H1 (cell line): ENCODE measurements at regions of chr6 and their contacts with region 1.

Region 1: GRCh38 chr6:37018198-37019064 is 13.0 kb downstream of the FGD2 start:
- DNase-seq: peak; percentile 77 to 93
- H3K4me3 ChIP-seq: no peak overlapping the region
- H3K27ac ChIP-seq: no peak overlapping the region
- H3K4me1 ChIP-seq: peaks cover 0 to 5% (median 3%) of the 10 kb centered on the region in 4 experiments; a peak in 5 of 7 replicates
- H3K27me3 ChIP-seq: no peaks in the 10 kb centered on the region
- CTCF ChIP-seq: peak; percentile 97 to 100 (median 97)
- EP300 ChIP-seq: no peak
- POLR2A ChIP-seq: no peak
- RAD21 ChIP-seq: peak; percentile 97

Region 2: GRCh38 chr6:36660771-36661471 is 357.5 kb before region 1 on chr6:
- CTCF ChIA-PET with region 1: no interaction called
- POLR2A ChIA-PET with region 1: no interaction called
- DNase-seq: peak in 1 of 2 experiments; percentile 91
- H3K4me3 ChIP-seq: peak overlapping the region in 3 of 4 experiments; percentile 17 to 41 (median 24); a peak in 4 of 8 replicates
- H3K27ac ChIP-seq: no peak overlapping the region
- H3K4me1 ChIP-seq: peaks cover 5 to 15% (median 7%) of the 10 kb centered on the region in 4 experiments
- H3K27me3 ChIP-seq: peaks cover 0 to 4% (median 0%) of the 10 kb centered on the region in 4 experiments; a peak in 2 of 7 replicates
- CTCF ChIP-seq: no peak
- EP300 ChIP-seq: no peak
- POLR2A ChIP-seq: no peak
- RAD21 ChIP-seq: no peak

Region 3: GRCh38 chr6:36679028-36679833 is 339.2 kb before region 1 on chr6:
- CTCF ChIA-PET with region 1: no interaction called
- POLR2A ChIA-PET with region 1: no interaction called
- DNase-seq: peak in 1 of 2 experiments; percentile 75
- H3K4me3 ChIP-seq: peak overlapping the region; percentile 55 to 76 (median 69)
- H3K27ac ChIP-seq: no peak overlapping the region
- H3K4me1 ChIP-seq: peaks cover 5 to 36% (median 16%) of the 10 kb centered on the region in 4 experiments
- H3K27me3 ChIP-seq: peaks cover 6 to 28% (median 20%) of the 10 kb centered on the region in 4 experiments
- CTCF ChIP-seq: no peak
- EP300 ChIP-seq: no peak
- POLR2A ChIP-seq: no peak; a peak in 1 of 3 replicates
- RAD21 ChIP-seq: no peak

Region 4: DNA sequence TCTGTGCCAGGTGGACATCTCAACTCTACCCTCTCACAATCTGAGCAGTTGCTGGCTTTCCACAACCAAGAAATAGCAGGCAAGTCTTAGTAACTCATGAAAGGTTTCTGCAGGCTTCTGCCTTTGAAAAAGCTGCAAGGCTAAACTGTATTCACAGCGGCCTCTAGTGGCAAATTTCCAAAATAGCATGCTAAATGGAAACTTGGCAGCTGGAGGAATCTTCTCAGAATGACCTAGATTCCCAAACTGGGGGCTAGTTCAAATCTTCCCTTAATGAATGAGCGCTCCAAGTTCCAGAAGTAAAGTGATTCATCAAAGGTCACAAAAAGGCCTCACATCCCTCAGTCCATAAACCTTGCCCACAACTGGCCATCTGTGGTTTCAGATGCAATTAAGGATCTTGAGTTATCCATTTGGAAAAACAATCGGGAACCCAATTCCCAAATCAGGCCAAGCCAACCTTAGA is 167.2 kb before region 1 on chr6:
- CTCF ChIA-PET with region 1: interaction called, 13 read pairs
- POLR2A ChIA-PET with region 1: no interaction called
- DNase-seq: peak in 1 of 2 experiments; percentile 71
- H3K4me3 ChIP-seq: no peak overlapping the region
- H3K27ac ChIP-seq: no peak overlapping the region
- H3K4me1 ChIP-seq: peaks cover 7 to 17% (median 9%) of the 10 kb centered on the region in 4 experiments
- H3K27me3 ChIP-seq: peaks cover 0 to 9% (median 0%) of the 10 kb centered on the region in 4 experiments; a peak in 2 of 7 replicates
- CTCF ChIP-seq: peak in 2 of 3 experiments; percentile 75 to 85; a peak in 3 of 4 replicates
- EP300 ChIP-seq: no peak
- POLR2A ChIP-seq: no peak
- RAD21 ChIP-seq: peak; percentile 81 to 89

Region 5: GRCh38 chr6:36912586-36912985 is 105.8 kb before region 1 on chr6:
- CTCF ChIA-PET with region 1: interaction called, 27 read pairs
- POLR2A ChIA-PET with region 1: interaction called, 3 read pairs
- DNase-seq: no peak
- H3K4me3 ChIP-seq: no peak overlapping the region
- H3K27ac ChIP-seq: no peak overlapping the region
- H3K4me1 ChIP-seq: no peaks in the 10 kb centered on the region; a peak in 1 of 7 replicates
- H3K27me3 ChIP-seq: no peaks in the 10 kb centered on the region
- CTCF ChIP-seq: no peak
- EP300 ChIP-seq: no peak
- POLR2A ChIP-seq: no peak
- RAD21 ChIP-seq: no peak

Region 6: GRCh38 chr6:36985808-36986703 is 32.4 kb before region 1 on chr6 and contains the start of gene MTCH1:
- CTCF ChIA-PET with region 1: interaction called, 237 read pairs
- POLR2A ChIA-PET with region 1: interaction called, 8 read pairs
- DNase-seq: peak; percentile 53 to 95
- H3K4me3 ChIP-seq: peak within 1 kb of the TSS; percentile 84 to 94 (median 90)
- H3K27ac ChIP-seq: peak within 1 kb of the TSS; percentile 91
- H3K4me1 ChIP-seq: peaks cover 6 to 17% (median 10%) of the 10 kb centered on the region in 4 experiments
- H3K27me3 ChIP-seq: no peaks in the 10 kb centered on the region; a peak in 1 of 7 replicates
- CTCF ChIP-seq: no peak
- EP300 ChIP-seq: peak in 1 of 2 experiments; percentile 92; a peak in 2 of 3 replicates
- POLR2A ChIP-seq: peak; percentile 73 to 90
- RAD21 ChIP-seq: no peak
- total RNA-seq, gene MTCH1: 205 and 214 TPM in 2 replicates

Region 7: DNA sequence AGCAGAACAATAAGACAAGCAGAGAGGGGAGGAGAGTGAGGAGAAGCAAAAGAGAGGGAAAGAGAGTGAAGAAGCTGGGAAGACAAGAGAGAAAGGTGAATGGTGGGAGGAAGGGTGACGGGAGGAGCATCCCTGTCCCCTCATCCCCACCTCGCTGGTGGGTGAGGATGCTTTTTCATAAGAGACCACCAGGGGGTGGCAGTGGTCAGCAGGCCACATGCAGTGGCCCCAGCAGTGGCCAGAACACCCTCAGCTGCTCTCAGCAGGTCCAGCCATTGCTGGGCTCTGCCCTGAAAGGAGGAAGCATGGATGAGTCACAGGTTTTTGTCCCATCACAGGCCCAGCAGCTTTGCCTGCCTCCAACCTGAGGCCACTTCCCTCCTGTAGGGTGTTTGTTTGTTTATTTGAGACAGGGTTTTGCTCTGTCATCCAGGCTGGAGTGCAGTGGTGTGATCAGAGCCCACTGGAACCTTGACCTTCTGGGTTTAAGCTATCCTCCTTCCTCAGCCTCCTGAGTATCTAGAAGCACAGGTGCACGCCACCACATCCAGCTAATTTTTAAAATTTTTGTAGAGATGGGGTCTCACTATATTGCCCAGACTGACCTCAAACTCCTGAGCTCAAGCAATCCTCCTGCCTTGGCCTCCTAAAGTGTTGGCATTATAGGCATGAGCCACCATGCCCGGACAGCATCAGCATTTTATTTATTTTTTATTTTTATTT is 11.0 kb after region 1 on chr6:
- CTCF ChIA-PET with region 1: interaction called, 635 read pairs
- POLR2A ChIA-PET with region 1: interaction called, 3 read pairs
- DNase-seq: peak in 1 of 2 experiments; percentile 82
- H3K4me3 ChIP-seq: no peak overlapping the region
- H3K27ac ChIP-seq: no peak overlapping the region; the same call in 1 of the 2 replicates
- H3K4me1 ChIP-seq: no peaks in the 10 kb centered on the region
- H3K27me3 ChIP-seq: no peaks in the 10 kb centered on the region
- CTCF ChIP-seq: peak; percentile 76 to 88 (median 80)
- EP300 ChIP-seq: no peak
- POLR2A ChIP-seq: no peak
- RAD21 ChIP-seq: peak; percentile 82 to 84

Region 8: DNA sequence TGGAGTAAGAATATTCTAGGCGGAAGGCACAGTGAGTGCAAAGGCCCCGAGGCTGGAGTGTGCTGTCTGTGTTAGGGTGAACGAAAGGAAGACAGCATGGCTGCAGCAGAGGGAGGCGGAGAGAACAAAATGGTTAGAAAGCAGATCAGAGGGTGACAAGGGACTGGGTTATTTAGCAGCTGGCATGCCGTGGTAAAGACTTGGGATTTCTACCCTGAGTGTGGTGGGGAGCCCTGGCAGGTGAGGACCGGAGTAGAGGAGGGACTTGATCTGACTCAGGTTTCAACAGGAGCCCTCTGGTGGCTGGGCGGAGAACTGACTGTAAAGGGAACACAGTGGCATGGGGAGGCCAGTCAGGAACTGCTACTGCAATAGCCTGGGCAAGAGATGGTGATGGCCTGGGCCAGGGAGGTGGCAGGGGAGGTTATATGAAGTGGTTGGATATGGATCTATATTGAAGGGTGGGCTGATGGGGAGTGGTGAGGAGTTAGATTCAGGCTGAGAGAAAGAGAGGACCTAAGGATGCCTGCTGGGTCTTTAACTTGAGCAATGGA is 189.5 kb after region 1 on chr6:
- CTCF ChIA-PET with region 1: interaction called, 866 read pairs
- POLR2A ChIA-PET with region 1: no interaction called
- DNase-seq: peak; percentile 87 to 97
- H3K4me3 ChIP-seq: no peak overlapping the region
- H3K27ac ChIP-seq: no peak overlapping the region
- H3K4me1 ChIP-seq: no peaks in the 10 kb centered on the region; a peak in 1 of 7 replicates
- H3K27me3 ChIP-seq: no peaks in the 10 kb centered on the region
- CTCF ChIP-seq: peak; percentile 87 to 94 (median 94)
- EP300 ChIP-seq: no peak
- POLR2A ChIP-seq: no peak
- RAD21 ChIP-seq: peak; percentile 84